GM12878 (cell line): ENCODE measurements at regions of chr3 and their contacts with region 1.

Region 1: GRCh38 chr3:179015551-179016020 is 56.0 kb downstream of the ZMAT3 start:
- DNase-seq: peak; percentile 93
- ATAC-seq: peak; percentile 75
- H3K4me3 ChIP-seq: no peak overlapping the region
- H3K27ac ChIP-seq: peak overlapping the region; percentile 68
- H3K4me1 ChIP-seq: peaks cover 42% of the 10 kb centered on the region
- H3K27me3 ChIP-seq: no peaks in the 10 kb centered on the region
- CTCF ChIP-seq: peak; percentile 66 to 88 (median 83)
- EP300 ChIP-seq: no peak
- POLR2A ChIP-seq: no peak
- RAD21 ChIP-seq: peak; percentile 92

Region 2: GRCh38 chr3:178443634-178444033 is 572.0 kb before region 1 on chr3:
- CTCF ChIA-PET with region 1: no interaction called
- POLR2A ChIA-PET with region 1: no interaction called
- RAD21 ChIA-PET with region 1: no interaction called
- SMC1A ChIA-PET with region 1: no interaction called
- in situ Hi-C with region 1: no loop called
- intact Hi-C with region 1: loop called (anchors 5 kb)
- DNase-seq: no peak
- ATAC-seq: no peak; the same call in 1 of the 3 replicates
- H3K4me3 ChIP-seq: no peak overlapping the region
- H3K27ac ChIP-seq: no peak overlapping the region
- H3K4me1 ChIP-seq: no peaks in the 10 kb centered on the region
- H3K27me3 ChIP-seq: no peaks in the 10 kb centered on the region
- CTCF ChIP-seq: peak in 2 of 3 experiments; percentile 10 to 23; a peak in 2 of 6 replicates
- EP300 ChIP-seq: no peak
- POLR2A ChIP-seq: no peak
- RAD21 ChIP-seq: peak; percentile 62

Region 3: DNA sequence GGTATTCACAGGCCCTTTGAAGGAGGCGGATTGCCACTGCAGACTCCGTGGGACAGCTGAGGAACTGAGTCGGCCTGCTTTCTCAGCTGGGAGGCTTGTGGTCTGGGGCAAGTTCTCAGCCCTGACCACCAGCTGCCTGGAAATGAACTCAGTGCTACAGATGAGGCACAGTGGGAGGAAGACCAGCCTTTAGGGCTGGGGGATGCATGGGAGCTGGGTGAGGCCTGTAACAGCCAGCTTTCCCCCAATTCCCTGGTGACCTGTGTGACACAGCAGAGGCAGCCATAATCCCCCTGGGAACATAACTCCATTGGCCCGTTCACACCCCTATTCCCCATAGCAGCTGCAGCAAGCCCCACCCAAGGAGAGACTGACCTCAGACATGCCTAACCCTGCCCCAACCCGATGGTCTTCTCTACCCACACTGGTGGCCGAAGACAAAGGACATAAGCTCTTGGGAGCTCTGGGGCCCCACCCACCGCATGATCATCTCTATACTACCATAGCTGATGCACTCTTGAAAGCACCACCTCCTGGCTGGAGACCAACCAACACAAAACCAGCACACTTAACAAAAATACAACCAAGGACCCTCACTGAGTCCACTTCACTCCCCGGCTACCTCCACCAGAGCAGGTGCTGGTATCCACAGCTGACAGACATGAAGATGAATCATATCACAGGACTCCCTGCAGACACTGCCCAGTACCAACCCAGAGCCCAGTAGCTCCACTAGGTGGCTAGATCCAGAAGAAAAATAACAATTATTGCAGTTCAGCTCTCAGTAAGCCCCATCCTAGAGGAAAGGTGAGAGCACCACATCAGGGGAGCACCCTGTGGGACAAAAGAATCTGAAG is 31.1 kb after region 1 on chr3:
- CTCF ChIA-PET with region 1: interaction called, 62 read pairs
- POLR2A ChIA-PET with region 1: interaction called, 34 read pairs
- RAD21 ChIA-PET with region 1: interaction called, 96 read pairs
- SMC1A ChIA-PET with region 1: interaction called, 44 read pairs
- in situ Hi-C with region 1: no loop called
- intact Hi-C with region 1: loop called (anchors 1 kb)
- DNase-seq: peak; percentile 89
- ATAC-seq: peak; percentile 86
- H3K4me3 ChIP-seq: peak overlapping the region; percentile 10; the same call in 1 of the 2 replicates
- H3K27ac ChIP-seq: peak overlapping the region; percentile 84
- H3K4me1 ChIP-seq: peaks cover 22% of the 10 kb centered on the region
- H3K27me3 ChIP-seq: no peaks in the 10 kb centered on the region
- CTCF ChIP-seq: peak; percentile 8 to 30 (median 24); a peak in 1 of 6 replicates
- EP300 ChIP-seq: peak in 1 of 2 experiments; percentile 75; a peak in 2 of 4 replicates
- POLR2A ChIP-seq: peak; percentile 40
- RAD21 ChIP-seq: no peak

Region 4: GRCh38 chr3:179083977-179084376 is 68.4 kb after region 1 on chr3:
- CTCF ChIA-PET with region 1: interaction called, 11 read pairs
- POLR2A ChIA-PET with region 1: no interaction called
- RAD21 ChIA-PET with region 1: no interaction called
- SMC1A ChIA-PET with region 1: interaction called, 3 read pairs
- in situ Hi-C with region 1: no loop called
- intact Hi-C with region 1: no loop called
- DNase-seq: no peak
- ATAC-seq: peak; percentile 72
- H3K4me3 ChIP-seq: no peak overlapping the region
- H3K27ac ChIP-seq: peak overlapping the region; percentile 31; the same call in 1 of the 2 replicates
- H3K4me1 ChIP-seq: peaks cover 6% of the 10 kb centered on the region; the same call in 1 of the 2 replicates
- H3K27me3 ChIP-seq: no peaks in the 10 kb centered on the region
- CTCF ChIP-seq: no peak
- EP300 ChIP-seq: no peak
- POLR2A ChIP-seq: no peak
- RAD21 ChIP-seq: no peak

Region 5: DNA sequence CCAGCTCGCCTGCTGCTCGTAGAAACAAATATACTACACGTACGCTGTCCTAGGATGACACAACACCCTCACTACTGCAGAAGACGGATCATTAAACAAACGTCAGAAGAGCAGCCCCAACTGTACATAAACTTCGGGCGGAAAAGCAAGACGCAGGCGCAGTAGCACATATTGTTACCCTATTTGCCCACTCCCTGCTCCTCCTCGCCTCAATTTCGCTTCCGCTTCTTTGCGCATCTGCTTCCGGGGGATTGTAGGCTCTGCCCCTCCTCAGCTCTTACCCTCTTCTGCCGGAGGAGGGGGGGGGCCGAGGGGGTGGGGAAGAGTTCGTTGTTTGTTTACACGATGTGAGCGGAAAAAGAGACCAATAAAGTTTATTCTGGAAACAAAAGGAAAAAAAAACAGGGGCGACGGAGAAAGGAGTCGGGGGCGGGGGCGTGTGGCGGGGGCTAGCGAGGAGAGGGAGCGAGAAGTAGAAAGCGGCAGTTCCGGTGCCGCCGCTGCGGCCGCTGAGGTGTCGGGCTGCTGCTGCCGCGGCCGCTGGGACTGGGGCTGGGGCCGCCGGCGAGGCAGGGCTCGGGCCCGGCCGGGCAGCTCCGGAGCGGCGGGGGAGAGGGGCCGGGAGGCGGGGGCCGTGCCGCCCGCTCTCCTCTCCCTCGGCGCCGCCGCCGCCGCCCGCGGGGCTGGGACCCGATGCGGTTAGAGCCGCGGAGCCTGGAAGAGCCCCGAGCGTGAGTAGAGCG is 132.5 kb after region 1 on chr3 and contains the start of gene PIK3CA:
- CTCF ChIA-PET with region 1: interaction called, 5 read pairs
- POLR2A ChIA-PET with region 1: no interaction called
- RAD21 ChIA-PET with region 1: interaction called, 8 read pairs
- SMC1A ChIA-PET with region 1: interaction called, 8 read pairs
- in situ Hi-C with region 1: no loop called
- intact Hi-C with region 1: loop called (anchors 2 kb)
- DNase-seq: peak; percentile 96
- ATAC-seq: peak; percentile 83
- H3K4me3 ChIP-seq: peak within 1 kb of the TSS; percentile 82
- H3K27ac ChIP-seq: peak within 1 kb of the TSS; percentile 88
- H3K4me1 ChIP-seq: peaks cover 5% of the 10 kb centered on the region; the same call in 1 of the 2 replicates
- H3K27me3 ChIP-seq: no peaks in the 10 kb centered on the region
- CTCF ChIP-seq: no peak
- EP300 ChIP-seq: peak in 1 of 2 experiments; percentile 2; a peak in 1 of 4 replicates
- POLR2A ChIP-seq: peak; percentile 76
- RAD21 ChIP-seq: no peak
- polyA plus RNA-seq, gene PIK3CA: 3.0 to 4.1 TPM

Region 6: DNA sequence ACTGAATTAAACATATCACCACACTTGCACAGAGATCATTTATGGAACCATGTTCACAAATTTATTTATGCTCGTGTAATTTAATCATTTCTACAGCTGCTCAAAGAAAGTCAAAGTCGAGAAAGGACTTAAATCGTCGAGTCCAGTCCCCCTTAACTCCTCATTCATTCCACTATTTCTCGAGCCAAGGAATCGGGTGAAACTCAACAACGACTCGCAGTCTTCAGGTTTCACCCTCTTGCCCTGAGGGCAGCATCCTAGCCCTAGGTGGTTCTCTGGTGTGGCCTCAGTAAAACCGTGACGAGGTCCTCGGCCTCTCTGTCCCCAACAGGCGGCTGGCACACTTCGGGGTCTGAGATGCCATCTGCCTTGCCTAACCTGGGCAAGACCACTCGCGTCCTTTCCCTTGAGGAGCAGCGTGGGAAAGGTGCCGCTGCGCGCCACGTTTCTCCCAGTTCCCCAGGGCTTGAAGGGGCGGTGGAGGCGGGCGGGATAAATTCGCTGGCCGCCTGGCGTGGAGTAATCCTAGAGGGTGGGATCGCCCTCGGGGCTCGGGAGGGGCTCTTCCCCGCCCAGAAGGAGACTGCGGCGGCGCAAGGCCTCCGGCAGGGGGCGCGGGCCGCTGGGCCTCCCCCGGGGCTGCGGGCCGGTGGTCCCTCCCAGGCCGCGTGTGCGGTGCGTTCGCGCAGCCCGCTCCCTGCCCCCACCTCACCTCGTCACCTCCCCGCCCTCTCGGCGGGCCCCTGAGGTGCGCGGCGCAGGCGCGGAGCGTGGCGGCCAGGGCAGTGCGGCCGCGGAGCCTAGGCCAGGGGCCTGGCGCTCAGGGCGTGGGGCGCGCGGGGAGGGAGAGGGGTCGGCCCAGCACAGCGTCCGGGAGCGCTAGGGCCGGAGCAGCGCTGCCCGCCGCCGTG is 307.0 kb after region 1 on chr3 and contains the start of gene ZNF639:
- CTCF ChIA-PET with region 1: interaction called, 26 read pairs
- POLR2A ChIA-PET with region 1: interaction called, 4 read pairs
- RAD21 ChIA-PET with region 1: interaction called, 11 read pairs
- SMC1A ChIA-PET with region 1: interaction called, 25 read pairs
- in situ Hi-C with region 1: loop called (anchors 5 kb)
- intact Hi-C with region 1: no loop called
- DNase-seq: no peak
- ATAC-seq: peak; percentile 84
- H3K4me3 ChIP-seq: peak within 1 kb of the TSS; percentile 78
- H3K27ac ChIP-seq: peak within 1 kb of the TSS; percentile 94
- H3K4me1 ChIP-seq: peaks cover 8% of the 10 kb centered on the region
- H3K27me3 ChIP-seq: no peaks in the 10 kb centered on the region
- CTCF ChIP-seq: peak; percentile 71 to 84 (median 82)
- EP300 ChIP-seq: no peak
- POLR2A ChIP-seq: peak; percentile 81
- RAD21 ChIP-seq: peak; percentile 47
- polyA plus RNA-seq, gene ZNF639: 16.3 to 17.7 TPM